GM12878 (cell line): ENCODE measurements at regions of chr16 and their contacts with region 1.

Region 1: DNA sequence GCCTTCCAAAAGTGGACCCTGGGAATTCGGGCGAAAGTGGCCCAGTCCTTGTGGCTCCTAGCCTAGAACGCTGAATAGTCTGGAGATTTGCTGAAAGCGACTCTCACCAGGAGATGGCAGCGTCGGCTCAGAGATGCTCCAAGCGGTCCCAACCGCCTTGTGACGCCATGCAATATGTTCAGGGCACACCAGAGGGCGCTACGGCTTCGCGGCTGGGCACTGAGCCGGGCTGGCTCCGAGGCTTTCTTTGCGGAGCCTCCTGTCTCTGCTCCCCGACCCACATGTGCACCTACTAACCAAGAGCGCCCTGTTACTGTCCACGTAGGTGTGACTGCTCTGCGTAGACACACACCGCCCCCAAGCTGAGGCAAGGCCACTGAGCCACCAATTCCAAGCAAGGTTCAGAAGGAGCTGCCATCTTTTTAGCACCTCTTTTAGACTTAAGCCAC is 36.9 kb downstream of the SYCE1L start:
- DNase-seq: no peak
- ATAC-seq: peak; percentile 97
- H3K4me3 ChIP-seq: no peak overlapping the region
- H3K27ac ChIP-seq: no peak overlapping the region
- H3K4me1 ChIP-seq: no peaks in the 10 kb centered on the region
- H3K27me3 ChIP-seq: no peaks in the 10 kb centered on the region; a peak in 1 of 4 replicates
- CTCF ChIP-seq: peak; percentile 99 to 100 (median 100); a peak in 5 of 6 replicates
- EP300 ChIP-seq: no peak
- POLR2A ChIP-seq: no peak
- RAD21 ChIP-seq: peak; percentile 100

Region 2: GRCh38 chr16:77220427-77220826 is 15.7 kb before region 1 on chr16:
- CTCF ChIA-PET with region 1: interaction called, 10 read pairs
- POLR2A ChIA-PET with region 1: no interaction called
- RAD21 ChIA-PET with region 1: interaction called, 5 read pairs
- SMC1A ChIA-PET with region 1: no interaction called
- in situ Hi-C with region 1: no loop called
- intact Hi-C with region 1: no loop called
- DNase-seq: peak; percentile 25
- ATAC-seq: peak; percentile 98
- H3K4me3 ChIP-seq: no peak overlapping the region
- H3K27ac ChIP-seq: no peak overlapping the region
- H3K4me1 ChIP-seq: no peaks in the 10 kb centered on the region
- H3K27me3 ChIP-seq: no peaks in the 10 kb centered on the region
- CTCF ChIP-seq: no peak
- EP300 ChIP-seq: no peak
- POLR2A ChIP-seq: no peak
- RAD21 ChIP-seq: no peak

Region 3: GRCh38 chr16:77376358-77376757 is 140.3 kb after region 1 on chr16:
- CTCF ChIA-PET with region 1: interaction called, 9 read pairs
- POLR2A ChIA-PET with region 1: no interaction called
- RAD21 ChIA-PET with region 1: no interaction called
- SMC1A ChIA-PET with region 1: no interaction called
- in situ Hi-C with region 1: loop called (anchors 5 kb)
- intact Hi-C with region 1: loop called (anchors 1 kb)
- DNase-seq: no peak
- ATAC-seq: peak; percentile 57; the same call in 2 of the 3 replicates
- H3K4me3 ChIP-seq: no peak overlapping the region
- H3K27ac ChIP-seq: no peak overlapping the region
- H3K4me1 ChIP-seq: no peaks in the 10 kb centered on the region
- H3K27me3 ChIP-seq: no peaks in the 10 kb centered on the region; a peak in 1 of 4 replicates
- CTCF ChIP-seq: peak; percentile 24 to 46 (median 36); a peak in 5 of 6 replicates
- EP300 ChIP-seq: no peak
- POLR2A ChIP-seq: no peak
- RAD21 ChIP-seq: peak; percentile 46

Region 4: DNA sequence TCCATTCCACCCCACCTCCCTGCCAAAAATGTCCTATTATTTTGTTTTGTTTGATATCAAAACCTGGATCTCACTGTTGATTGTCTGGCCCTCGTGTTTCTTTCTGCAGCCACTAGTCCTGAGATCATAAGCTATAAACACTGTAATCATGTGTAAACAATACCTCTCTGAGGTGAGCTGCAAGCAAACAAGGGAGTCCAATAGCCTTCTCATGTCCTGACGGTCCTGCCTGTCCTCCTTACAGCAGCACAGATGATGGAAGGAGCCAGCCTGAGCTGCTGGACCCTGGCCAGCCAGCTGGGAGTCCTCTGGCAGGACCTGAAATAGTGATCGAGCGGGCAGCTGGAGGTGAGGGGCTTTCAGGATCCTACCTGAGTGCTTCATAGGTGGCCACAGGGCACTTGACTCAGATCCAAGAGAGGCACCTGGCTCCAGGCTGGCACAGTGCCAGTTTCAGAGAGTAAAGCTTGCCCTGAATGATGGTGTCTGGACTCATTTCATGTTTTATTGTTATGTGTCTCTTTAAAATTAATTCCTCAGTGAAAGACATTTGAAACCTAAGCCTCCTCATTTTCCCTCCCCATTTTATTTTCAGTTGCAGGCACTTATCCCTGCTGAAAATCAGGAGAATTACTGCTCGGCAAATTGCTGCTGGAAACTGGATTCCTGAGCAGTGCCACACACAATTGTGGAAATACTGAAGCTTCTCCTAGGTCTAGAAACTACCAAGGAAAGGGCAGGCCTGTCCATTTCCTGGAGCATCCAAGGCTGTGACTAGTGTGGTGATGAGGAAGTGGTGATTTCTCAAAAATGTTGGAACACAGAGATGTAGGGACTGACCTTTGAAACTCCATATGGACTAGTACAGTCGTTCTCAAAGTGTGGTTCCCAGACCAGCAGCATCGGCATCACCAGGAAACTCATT is 214.7 kb after region 1 on chr16:
- CTCF ChIA-PET with region 1: no interaction called
- POLR2A ChIA-PET with region 1: no interaction called
- RAD21 ChIA-PET with region 1: no interaction called
- SMC1A ChIA-PET with region 1: no interaction called
- in situ Hi-C with region 1: no loop called
- intact Hi-C with region 1: loop called (anchors 2 kb)
- DNase-seq: no peak
- ATAC-seq: no peak
- H3K4me3 ChIP-seq: no peak overlapping the region
- H3K27ac ChIP-seq: no peak overlapping the region
- H3K4me1 ChIP-seq: no peaks in the 10 kb centered on the region
- H3K27me3 ChIP-seq: no peaks in the 10 kb centered on the region
- CTCF ChIP-seq: no peak
- EP300 ChIP-seq: no peak
- POLR2A ChIP-seq: no peak
- RAD21 ChIP-seq: no peak

Region 5: GRCh38 chr16:77584205-77584859 is 348.2 kb after region 1 on chr16:
- CTCF ChIA-PET with region 1: interaction called, 132 read pairs
- POLR2A ChIA-PET with region 1: no interaction called
- RAD21 ChIA-PET with region 1: interaction called, 42 read pairs
- SMC1A ChIA-PET with region 1: interaction called, 108 read pairs
- in situ Hi-C with region 1: loop called (anchors 5 kb)
- intact Hi-C with region 1: loop called (anchors 1 kb)
- DNase-seq: no peak
- ATAC-seq: peak; percentile 80
- H3K4me3 ChIP-seq: no peak overlapping the region
- H3K27ac ChIP-seq: no peak overlapping the region
- H3K4me1 ChIP-seq: no peaks in the 10 kb centered on the region
- H3K27me3 ChIP-seq: peaks cover 0 to 1% of the 10 kb centered on the region in 2 experiments; a peak in 1 of 4 replicates
- CTCF ChIP-seq: peak; percentile 67 to 78 (median 74)
- EP300 ChIP-seq: no peak
- POLR2A ChIP-seq: no peak
- RAD21 ChIP-seq: peak; percentile 92

Region 6: GRCh38 chr16:77660311-77660710 is 424.2 kb after region 1 on chr16:
- CTCF ChIA-PET with region 1: no interaction called
- POLR2A ChIA-PET with region 1: no interaction called
- RAD21 ChIA-PET with region 1: no interaction called
- SMC1A ChIA-PET with region 1: no interaction called
- in situ Hi-C with region 1: no loop called
- intact Hi-C with region 1: loop called (anchors 2 kb)
- DNase-seq: no peak
- ATAC-seq: no peak
- H3K4me3 ChIP-seq: no peak overlapping the region
- H3K27ac ChIP-seq: no peak overlapping the region
- H3K4me1 ChIP-seq: no peaks in the 10 kb centered on the region
- H3K27me3 ChIP-seq: no peaks in the 10 kb centered on the region
- CTCF ChIP-seq: peak in 1 of 3 experiments; percentile 17; a peak in 1 of 6 replicates
- EP300 ChIP-seq: no peak
- POLR2A ChIP-seq: no peak
- RAD21 ChIP-seq: no peak

Region 7: DNA sequence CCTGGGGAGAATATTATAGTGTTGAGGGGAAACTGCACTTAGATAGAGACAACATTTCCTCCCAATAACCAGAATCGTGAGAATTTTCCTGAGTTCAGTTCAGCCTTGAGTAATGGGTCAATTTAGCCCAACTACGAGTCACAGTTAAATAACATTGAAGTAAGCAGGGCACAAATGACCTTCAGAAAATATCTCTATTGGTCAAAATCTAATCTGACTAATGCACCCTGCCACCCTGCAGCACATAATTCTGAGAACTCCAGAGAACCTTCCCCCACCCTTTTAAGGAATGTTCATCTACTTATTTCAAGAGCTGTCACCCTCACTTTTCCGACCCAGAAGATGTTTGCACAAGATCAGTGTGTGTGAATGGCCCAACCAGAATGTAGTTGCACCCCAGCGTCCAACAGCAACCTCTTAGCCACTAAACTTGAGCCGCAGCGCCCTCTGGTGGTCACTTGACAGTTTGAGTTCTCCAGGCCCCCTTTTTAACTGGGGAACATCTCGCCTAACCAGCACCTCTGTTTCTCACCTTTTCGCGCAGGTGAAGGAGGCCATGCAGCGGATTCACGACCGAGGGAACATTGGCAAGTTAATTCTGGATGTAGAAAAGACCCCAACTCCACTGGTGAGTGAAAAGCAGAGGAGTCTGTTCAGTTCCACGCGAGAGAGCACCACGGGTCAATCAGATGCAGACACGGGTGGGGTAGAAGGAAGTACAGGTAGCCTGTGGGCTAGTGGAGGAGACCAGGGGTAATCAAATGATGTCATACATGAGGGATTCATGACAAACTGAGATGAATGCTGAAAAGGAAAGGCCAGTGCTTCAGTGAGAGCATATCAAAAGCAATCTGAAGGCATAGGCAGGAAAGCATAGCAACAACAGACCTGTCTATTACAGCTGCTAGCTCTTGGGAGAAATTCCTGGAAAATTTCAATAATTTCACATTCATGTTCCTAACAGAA is 735.5 kb after region 1 on chr16:
- CTCF ChIA-PET with region 1: no interaction called
- POLR2A ChIA-PET with region 1: no interaction called
- RAD21 ChIA-PET with region 1: no interaction called
- SMC1A ChIA-PET with region 1: no interaction called
- in situ Hi-C with region 1: no loop called
- intact Hi-C with region 1: loop called (anchors 10 kb)
- DNase-seq: no peak
- ATAC-seq: peak; percentile 95
- H3K4me3 ChIP-seq: no peak overlapping the region
- H3K27ac ChIP-seq: no peak overlapping the region
- H3K4me1 ChIP-seq: no peaks in the 10 kb centered on the region
- H3K27me3 ChIP-seq: no peaks in the 10 kb centered on the region
- CTCF ChIP-seq: peak; percentile 68 to 90 (median 76)
- EP300 ChIP-seq: no peak
- POLR2A ChIP-seq: no peak
- RAD21 ChIP-seq: peak; percentile 96